A673 (cell line): ENCODE measurements at regions of chr1 and their contacts with region 1.

Region 1: GRCh38 chr1:87953732-87954344 is 625.2 kb downstream of the LMO4 start:
- DNase-seq: peak; percentile 89
- H3K4me3 ChIP-seq: no peak overlapping the region
- H3K27ac ChIP-seq: no peak overlapping the region
- H3K4me1 ChIP-seq: peaks cover 12% of the 10 kb centered on the region
- H3K27me3 ChIP-seq: no peaks in the 10 kb centered on the region
- CTCF ChIP-seq: peak; percentile 88

Region 2: GRCh38 chr1:87292684-87293493 is 660.9 kb before region 1 on chr1:
- CTCF ChIA-PET with region 1: no interaction called
- POLR2A ChIA-PET with region 1: no interaction called
- intact Hi-C with region 1: loop called (anchors 2 kb)
- DNase-seq: peak; percentile 79
- H3K4me3 ChIP-seq: no peak overlapping the region
- H3K27ac ChIP-seq: no peak overlapping the region
- H3K4me1 ChIP-seq: peaks cover 7% of the 10 kb centered on the region
- H3K27me3 ChIP-seq: no peaks in the 10 kb centered on the region
- CTCF ChIP-seq: peak; percentile 83

Region 3: DNA sequence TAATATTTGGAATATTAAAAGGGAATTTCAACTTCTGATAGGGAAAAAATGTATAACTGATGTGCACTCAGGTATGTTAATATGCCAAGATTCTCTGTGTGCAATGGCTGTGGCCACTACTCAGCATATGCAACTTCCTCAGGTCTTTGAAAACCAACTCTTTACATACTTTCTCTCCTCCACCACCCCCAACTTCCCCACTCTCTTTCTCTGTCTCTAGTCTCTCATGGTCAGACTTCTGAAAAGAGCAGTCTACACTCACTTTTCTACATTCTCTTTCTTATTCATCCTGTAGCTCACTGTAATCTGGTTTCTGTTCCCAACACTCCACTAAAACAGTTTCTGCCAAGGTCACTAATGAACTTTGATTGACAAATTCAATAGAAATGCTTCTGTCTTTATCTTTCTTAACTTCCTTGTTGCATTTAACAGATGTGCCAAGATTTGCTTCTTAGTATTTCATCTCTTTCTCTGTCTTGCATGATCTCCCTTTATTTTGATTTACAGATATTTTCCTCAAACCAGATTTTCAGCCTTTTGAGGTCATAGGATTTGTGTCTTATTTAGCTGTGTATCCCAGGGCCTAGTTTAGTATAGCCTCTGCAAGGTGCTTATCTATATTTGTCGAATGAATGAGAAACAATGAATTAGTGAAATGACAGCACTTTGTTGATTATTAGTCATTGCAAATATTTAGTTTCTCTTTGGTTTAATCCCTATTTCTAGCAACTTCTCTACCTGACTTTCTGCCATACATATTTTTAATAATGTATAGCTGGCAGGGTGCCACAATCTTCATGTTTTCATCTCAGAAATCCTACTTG is 456.2 kb before region 1 on chr1:
- CTCF ChIA-PET with region 1: interaction called, 11 read pairs
- POLR2A ChIA-PET with region 1: no interaction called
- intact Hi-C with region 1: no loop called
- DNase-seq: no peak
- H3K4me3 ChIP-seq: no peak overlapping the region
- H3K27ac ChIP-seq: no peak overlapping the region
- H3K4me1 ChIP-seq: no peaks in the 10 kb centered on the region
- H3K27me3 ChIP-seq: no peaks in the 10 kb centered on the region
- CTCF ChIP-seq: no peak

Region 4: GRCh38 chr1:87684194-87684593 is 269.6 kb before region 1 on chr1:
- CTCF ChIA-PET with region 1: interaction called, 6 read pairs
- POLR2A ChIA-PET with region 1: no interaction called
- intact Hi-C with region 1: loop called (anchors 5 kb)
- DNase-seq: peak; percentile 51
- H3K4me3 ChIP-seq: peak overlapping the region; percentile 31
- H3K27ac ChIP-seq: peak overlapping the region; percentile 80
- H3K4me1 ChIP-seq: peaks cover 38% of the 10 kb centered on the region
- H3K27me3 ChIP-seq: no peaks in the 10 kb centered on the region
- CTCF ChIP-seq: no peak